SK-N-SH (cell line): ENCODE measurements at regions of chr20 and their contacts with region 1.

Region 1: DNA sequence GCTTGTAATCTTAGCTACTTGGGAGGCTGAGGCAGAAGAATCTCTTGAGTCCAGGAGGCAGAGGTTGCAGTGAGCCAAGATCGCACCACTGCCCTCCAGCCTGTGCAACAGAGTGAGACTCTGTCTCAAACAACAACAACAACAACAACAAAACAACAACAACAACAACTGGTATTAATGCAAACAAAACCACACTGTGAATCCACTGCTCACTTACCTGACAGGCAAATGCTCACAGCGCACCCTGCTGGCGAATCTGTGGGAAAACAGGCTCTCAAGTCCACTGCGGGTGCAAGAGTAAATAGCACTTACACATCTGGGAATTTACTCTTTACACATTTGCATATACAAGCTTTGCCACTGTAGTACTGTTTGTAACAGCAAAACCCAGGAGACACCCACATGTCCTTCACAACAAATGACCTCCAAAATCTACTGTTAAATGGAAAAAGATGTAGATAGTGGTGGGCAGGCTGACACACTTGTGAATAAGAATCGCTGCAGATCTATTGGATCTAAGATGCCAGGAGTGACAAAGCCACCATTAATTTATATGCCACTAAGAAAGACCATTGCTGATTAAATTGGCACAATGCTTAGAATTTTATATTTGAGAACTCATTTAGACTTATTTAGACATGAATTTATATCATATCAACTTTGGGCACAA is 29.3 kb downstream of the NSFL1C start:
- DNase-seq: peak; percentile 75
- H3K4me3 ChIP-seq: no peak overlapping the region; a peak in 1 of 4 replicates
- H3K27ac ChIP-seq: no peak overlapping the region
- H3K4me1 ChIP-seq: no peaks in the 10 kb centered on the region
- H3K27me3 ChIP-seq: no peaks in the 10 kb centered on the region
- CTCF ChIP-seq: peak; percentile 92
- EP300 ChIP-seq: no peak
- RAD21 ChIP-seq: peak; percentile 92

Region 2: GRCh38 chr20:1304710-1305515 is 132.5 kb before region 1 on chr20:
- CTCF ChIA-PET with region 1: interaction called, 10 read pairs
- POLR2A ChIA-PET with region 1: no interaction called
- DNase-seq: no peak
- H3K4me3 ChIP-seq: no peak overlapping the region
- H3K27ac ChIP-seq: no peak overlapping the region
- H3K4me1 ChIP-seq: 0 out of 4 replicates have a peak, but pooled peaks cover 0 to 4% of the 10 kb centered on the region in 2 experiments
- H3K27me3 ChIP-seq: no peaks in the 10 kb centered on the region
- CTCF ChIP-seq: no peak
- EP300 ChIP-seq: no peak
- RAD21 ChIP-seq: no peak

Region 3: DNA sequence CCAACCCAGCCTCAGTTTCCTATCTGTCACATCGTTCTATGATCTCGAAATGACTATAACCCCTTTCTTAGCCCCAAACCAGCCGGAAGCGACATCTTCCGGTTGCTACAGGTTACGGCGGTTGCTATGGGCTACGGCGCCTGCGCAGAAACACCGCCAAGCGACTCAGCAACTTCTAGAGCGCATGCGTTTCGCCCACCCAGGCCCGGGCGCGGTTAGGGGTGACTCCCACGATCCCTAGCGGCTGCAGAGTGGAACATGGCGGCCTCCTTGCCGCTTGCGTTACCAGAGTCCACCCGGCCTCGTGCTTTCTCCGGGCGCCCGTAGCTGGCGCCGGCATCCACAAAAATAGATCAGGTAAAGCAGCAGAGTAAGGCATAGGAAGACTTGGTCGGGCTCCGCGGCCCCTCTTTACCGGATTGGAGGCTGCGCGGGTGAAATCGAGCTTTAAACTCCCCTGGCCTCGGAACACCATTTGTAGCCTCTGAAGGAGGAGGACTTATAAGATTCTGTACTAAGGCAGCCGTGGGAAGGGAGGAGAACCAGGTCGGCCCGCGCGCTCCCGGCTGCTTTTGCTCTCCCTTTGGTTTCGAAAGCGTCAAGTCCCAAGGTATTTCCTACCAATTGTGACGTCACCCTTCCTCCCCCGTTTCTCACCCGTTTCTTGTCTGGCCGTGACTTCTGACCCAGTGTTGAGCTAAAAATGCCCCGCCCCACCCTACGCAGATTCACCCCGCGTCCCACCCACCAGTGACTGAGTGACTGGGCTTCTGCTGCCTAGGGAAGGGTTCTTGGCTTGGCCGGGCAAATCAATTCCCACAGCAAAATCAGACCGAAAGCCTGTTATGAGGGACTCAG is 112.0 kb before region 1 on chr20:
- CTCF ChIA-PET with region 1: interaction called, 11 read pairs
- POLR2A ChIA-PET with region 1: no interaction called
- DNase-seq: peak; percentile 98
- H3K4me3 ChIP-seq: peak overlapping the region; percentile 87 to 97
- H3K27ac ChIP-seq: peak overlapping the region; percentile 94 to 98
- H3K4me1 ChIP-seq: peaks cover 32 to 39% of the 10 kb centered on the region in 2 experiments
- H3K27me3 ChIP-seq: no peaks in the 10 kb centered on the region
- CTCF ChIP-seq: peak; percentile 17; the same call in 1 of the 2 replicates
- EP300 ChIP-seq: no peak
- RAD21 ChIP-seq: peak; percentile 3; the same call in 1 of the 2 replicates

Region 4: GRCh38 chr20:1392823-1393506 is 44.4 kb before region 1 on chr20 and contains the start of gene FKBP1A:
- CTCF ChIA-PET with region 1: interaction called, 12 read pairs
- POLR2A ChIA-PET with region 1: no interaction called
- DNase-seq: peak; percentile 95
- H3K4me3 ChIP-seq: peak within 1 kb of the TSS; percentile 90 to 95
- H3K27ac ChIP-seq: peak within 1 kb of the TSS; percentile 75 to 83; a peak in 3 of 4 replicates
- H3K4me1 ChIP-seq: peaks cover 20 to 41% of the 10 kb centered on the region in 2 experiments; a peak in 3 of 4 replicates
- H3K27me3 ChIP-seq: no peaks in the 10 kb centered on the region
- CTCF ChIP-seq: no peak
- EP300 ChIP-seq: peak in 1 of 2 experiments; percentile 13; a peak in 1 of 4 replicates
- RAD21 ChIP-seq: peak; percentile 5; the same call in 1 of the 2 replicates
- polyA plus RNA-seq, gene FKBP1A: 362 and 453 TPM in 2 replicates

Region 5: GRCh38 chr20:1466211-1467081 is 29.1 kb after region 1 on chr20 and contains the start of gene NSFL1C:
- CTCF ChIA-PET with region 1: interaction called, 25 read pairs
- POLR2A ChIA-PET with region 1: no interaction called
- DNase-seq: peak; percentile 98
- H3K4me3 ChIP-seq: peak within 1 kb of the TSS; percentile 81 to 97
- H3K27ac ChIP-seq: peak within 1 kb of the TSS; percentile 76 to 79
- H3K4me1 ChIP-seq: peaks cover 15 to 16% of the 10 kb centered on the region in 2 experiments; a peak in 1 of 4 replicates
- H3K27me3 ChIP-seq: no peaks in the 10 kb centered on the region
- CTCF ChIP-seq: peak; percentile 72
- EP300 ChIP-seq: peak; percentile 22 to 23; a peak in 1 of 4 replicates
- RAD21 ChIP-seq: peak; percentile 32; the same call in 1 of the 2 replicates
- polyA plus RNA-seq, gene NSFL1C: 30.6 and 45.9 TPM in 2 replicates

Region 6: DNA sequence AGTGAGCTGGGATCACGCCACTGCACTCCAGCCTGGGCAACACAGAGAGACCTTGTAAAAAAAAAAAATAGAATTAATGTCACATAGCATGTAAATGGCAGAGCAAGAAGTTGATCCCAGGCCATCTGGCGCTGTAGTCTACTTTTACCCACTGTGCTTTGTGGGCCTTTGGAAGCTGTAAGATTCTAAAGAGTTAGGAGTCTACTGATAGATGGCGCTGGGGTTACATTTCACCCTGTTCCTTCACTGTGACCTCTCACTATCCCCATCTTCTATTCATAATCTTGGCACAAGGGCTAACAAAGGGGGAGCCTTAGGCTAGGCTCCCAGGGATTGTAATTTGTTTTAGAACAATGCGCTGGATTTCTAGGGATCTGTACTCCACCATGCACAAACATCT is 95.7 kb after region 1 on chr20:
- CTCF ChIA-PET with region 1: no interaction called
- POLR2A ChIA-PET with region 1: no interaction called
- DNase-seq: no peak
- H3K4me3 ChIP-seq: no peak overlapping the region
- H3K27ac ChIP-seq: no peak overlapping the region
- H3K4me1 ChIP-seq: no peaks in the 10 kb centered on the region
- H3K27me3 ChIP-seq: no peaks in the 10 kb centered on the region
- CTCF ChIP-seq: no peak; the same call in 1 of the 2 replicates
- EP300 ChIP-seq: no peak
- RAD21 ChIP-seq: peak; percentile 15; the same call in 1 of the 2 replicates